Motor neuron (in vitro differentiated cells): ENCODE measurements at regions of chr6 and their contacts with region 1.

Region 1: DNA sequence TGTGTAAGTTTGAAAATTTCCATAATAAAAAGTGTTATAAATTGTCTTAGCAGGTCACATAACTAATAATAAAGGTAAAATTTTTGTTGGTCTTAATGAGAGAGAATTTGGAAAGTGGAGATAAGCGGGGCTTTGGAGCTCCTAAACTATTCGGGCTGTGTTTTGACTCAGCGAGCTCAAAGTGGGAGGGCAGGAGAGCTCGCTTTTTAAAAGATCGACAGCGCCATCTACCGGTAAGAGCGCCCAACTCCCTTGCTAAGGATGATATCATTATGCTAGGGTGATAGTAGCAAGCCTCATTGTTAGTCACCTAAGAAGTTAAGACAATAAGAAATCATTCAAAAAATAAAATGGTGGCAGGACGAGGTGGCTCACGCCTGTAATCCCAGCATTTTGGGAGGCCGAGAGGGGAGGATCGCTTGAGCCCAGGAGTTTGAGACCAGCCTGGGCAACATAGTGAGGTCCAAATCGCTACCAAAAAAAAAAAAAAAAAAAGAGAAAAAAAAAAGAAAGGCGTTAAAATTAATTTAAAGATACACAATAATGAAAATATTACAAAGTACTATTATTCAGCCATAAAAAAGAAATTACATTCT is 24.8 kb downstream of the C6orf15 start:
- ATAC-seq: peak; percentile 89 to 98 (median 92)
- H3K4me3 ChIP-seq: no peak overlapping the region
- H3K27ac ChIP-seq: no peak overlapping the region
- H3K4me1 ChIP-seq: peaks cover 0 to 9% of the 10 kb centered on the region in 2 donors

Region 2: DNA sequence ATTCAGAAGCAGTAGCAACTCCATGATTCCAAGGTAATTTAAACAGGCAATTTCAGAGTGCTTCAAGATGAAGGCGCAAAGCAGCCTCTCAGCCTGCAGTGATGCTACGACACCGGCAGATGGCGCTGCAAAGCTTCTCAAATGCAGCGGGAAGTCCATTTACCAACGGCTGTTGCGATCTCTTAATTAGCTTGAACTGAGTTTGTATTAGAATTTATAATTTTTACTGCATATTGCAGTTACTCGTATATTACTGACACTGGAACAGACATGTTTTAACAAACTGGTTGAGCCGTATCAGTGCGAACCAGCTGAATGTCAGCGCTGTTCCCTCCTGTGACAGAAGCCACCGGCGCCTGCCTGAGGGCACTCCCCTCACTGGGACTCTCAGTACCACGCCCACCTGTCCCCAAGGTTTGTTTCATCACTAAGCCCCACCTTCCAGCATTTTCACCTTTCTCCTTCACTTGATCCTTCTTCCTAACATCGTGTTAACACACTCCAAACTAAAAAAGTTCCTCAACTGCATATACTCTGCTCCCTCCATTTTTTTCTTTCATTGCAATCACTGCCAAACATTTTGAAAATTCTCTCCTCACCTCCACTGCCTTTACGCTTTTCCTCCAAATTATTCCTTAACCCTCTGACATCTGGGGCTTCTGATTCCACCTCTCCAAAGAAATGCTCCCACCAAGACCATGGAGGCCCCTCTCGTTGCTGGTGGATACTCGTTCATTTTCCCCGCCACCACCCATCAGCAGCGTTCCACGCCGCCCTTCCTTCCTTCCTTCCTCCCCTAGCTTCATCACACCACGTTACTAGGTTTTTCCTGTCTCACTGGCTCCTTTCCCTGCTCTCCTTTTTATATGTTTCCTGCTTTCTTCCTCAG is 545.8 kb before region 1 on chr6:
- in situ Hi-C with region 1: loop called in 1 of 9 experiments (anchors 25 kb)
- ATAC-seq: peak; percentile 71 to 81 (median 76)
- H3K4me3 ChIP-seq: peak overlapping the region; percentile 17 to 28 (median 21)
- H3K27ac ChIP-seq: no peak overlapping the region
- H3K4me1 ChIP-seq: peaks cover 0 to 3% of the 10 kb centered on the region in 2 donors

Region 3: GRCh38 chr6:30742316-30743098 is 345.1 kb before region 1 on chr6 and contains the start of gene FLOT1:
- in situ Hi-C with region 1: loop called in 2 of 9 experiments (anchors 25 kb)
- ATAC-seq: peak; percentile 50 to 88 (median 85)
- H3K4me3 ChIP-seq: peak within 1 kb of the TSS; percentile 52 to 88 (median 69)
- H3K27ac ChIP-seq: peak within 1 kb of the TSS; percentile 77 to 80
- H3K4me1 ChIP-seq: peaks cover 9 to 14% of the 10 kb centered on the region in 2 donors
- total RNA-seq, gene FLOT1: 56.8 to 122 (median 75.9) TPM

Region 4: GRCh38 chr6:30828027-30828960 is 259.3 kb before region 1 on chr6:
- in situ Hi-C with region 1: loop called in 3 of 9 experiments (anchors 25 kb)
- ATAC-seq: peak; percentile 93 to 99 (median 98)
- H3K4me3 ChIP-seq: no peak overlapping the region
- H3K27ac ChIP-seq: peak overlapping the region in 1 of 2 donors; percentile 54
- H3K4me1 ChIP-seq: peaks cover 9% of the 10 kb centered on the region in 2 donors

Region 5: DNA sequence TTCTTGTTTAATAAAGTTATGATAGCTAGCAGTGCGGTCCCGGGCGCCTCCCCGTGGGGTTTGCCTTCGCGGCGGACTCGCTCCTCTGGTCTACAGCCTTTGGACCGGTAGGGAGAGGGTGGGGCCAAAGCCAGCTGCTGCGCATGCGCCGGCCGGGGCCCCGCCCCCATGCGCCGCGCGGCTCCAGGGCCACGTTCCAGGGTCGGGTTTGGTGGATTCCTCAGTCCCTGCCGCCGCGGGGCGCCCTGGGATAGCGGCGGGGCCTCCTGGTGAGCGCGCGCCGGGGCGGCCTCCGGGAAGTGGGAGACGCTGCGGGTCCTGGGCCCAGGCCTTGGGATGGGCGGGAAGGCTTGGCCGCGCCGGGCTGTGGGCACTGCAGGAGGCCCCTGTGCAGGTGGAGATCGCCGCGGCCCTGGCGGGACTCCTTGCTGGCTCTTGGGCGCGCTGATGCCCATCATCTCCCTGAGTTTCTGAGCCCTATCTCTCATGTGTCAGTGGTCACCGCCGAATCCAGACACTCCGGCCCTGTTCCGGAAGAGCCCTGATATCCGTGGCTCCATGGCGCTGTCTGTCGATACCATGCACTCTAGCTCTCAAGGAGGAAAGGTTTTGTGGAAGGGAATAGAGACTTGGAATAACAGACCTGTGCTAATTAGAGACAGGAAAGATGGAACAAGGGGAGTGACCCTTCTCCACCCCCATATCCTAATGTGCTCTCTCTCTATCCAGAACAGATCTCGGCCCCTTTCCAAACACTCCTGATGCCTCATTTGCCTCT is 173.3 kb before region 1 on chr6 and contains the start of gene VARS2:
- in situ Hi-C with region 1: loop called in 3 of 9 experiments (anchors 25 kb)
- ATAC-seq: peak; percentile 89 to 95 (median 93)
- H3K4me3 ChIP-seq: peak within 1 kb of the TSS; percentile 34 to 49 (median 44)
- H3K27ac ChIP-seq: peak within 1 kb of the TSS; percentile 79 to 96
- H3K4me1 ChIP-seq: peaks cover 17 to 24% of the 10 kb centered on the region in 2 donors
- total RNA-seq, gene VARS2: 13.5 to 39.7 (median 21.0) TPM